A673 (cell line): ENCODE measurements at regions of chr3 and their contacts with region 1.

Region 1: DNA sequence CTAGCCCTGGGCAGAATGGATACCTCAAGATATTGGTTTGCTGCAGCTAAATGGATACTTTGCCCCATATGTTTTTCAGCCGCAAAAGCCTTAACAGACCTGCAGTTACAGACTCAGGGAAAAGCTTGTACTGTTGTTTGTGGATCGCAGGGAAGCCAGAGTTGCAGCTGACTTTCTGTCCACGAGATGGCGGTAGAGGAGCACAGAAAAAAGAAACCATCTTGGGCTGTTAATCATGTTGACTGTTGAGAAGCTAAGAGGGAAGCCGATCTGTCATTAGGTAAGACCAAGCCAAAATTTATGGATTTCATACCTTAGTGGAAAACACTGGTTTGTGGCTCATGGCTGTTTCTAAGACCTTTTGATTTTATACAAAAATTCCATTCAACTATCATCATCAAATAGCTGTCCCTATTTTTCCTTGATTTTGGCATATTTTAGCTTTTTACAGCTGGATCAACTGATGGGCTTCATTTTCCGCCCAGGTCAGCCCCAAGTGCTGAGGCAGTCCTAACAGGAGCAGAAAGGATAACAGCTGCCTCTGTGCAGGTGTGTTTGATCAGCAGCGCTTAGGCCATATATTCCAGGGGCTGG is 205.7 kb upstream of the ZPLD1 start:
- DNase-seq: peak; percentile 89
- H3K4me3 ChIP-seq: no peak overlapping the region
- H3K27ac ChIP-seq: no peak overlapping the region
- H3K4me1 ChIP-seq: peaks cover 38% of the 10 kb centered on the region
- H3K27me3 ChIP-seq: no peaks in the 10 kb centered on the region
- CTCF ChIP-seq: peak; percentile 97

Region 2: DNA sequence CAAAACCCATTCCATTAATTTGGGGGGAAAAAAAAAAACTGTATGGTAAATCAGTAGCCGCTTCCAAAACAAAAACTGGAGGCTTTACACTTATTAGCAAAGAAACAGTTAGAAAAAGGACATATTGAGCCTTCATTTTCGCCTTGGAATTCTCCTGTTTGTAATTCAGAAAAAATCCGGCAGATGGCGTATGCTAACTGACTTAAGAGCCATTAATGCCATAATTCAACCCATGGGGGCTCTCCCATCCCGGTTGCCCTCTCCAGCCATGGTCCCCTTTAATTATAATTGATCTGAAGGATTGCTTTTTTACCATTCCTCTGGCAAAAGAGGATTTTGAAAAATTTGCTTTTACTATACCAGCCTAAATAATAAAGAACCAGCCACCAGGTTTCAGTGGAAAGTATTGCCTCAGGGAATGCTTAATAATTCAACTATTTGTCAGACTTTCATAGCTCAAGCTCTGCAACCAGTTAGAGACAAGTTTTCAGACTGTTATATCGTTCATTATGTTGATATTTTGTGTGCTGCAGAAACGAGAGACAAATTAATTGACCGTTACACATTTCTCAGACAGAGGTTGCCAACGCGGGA is 533.3 kb before region 1 on chr3:
- CTCF ChIA-PET with region 1: no interaction called
- POLR2A ChIA-PET with region 1: no interaction called
- intact Hi-C with region 1: loop called (anchors 5 kb)
- DNase-seq: peak; percentile 85
- H3K4me3 ChIP-seq: peak overlapping the region; percentile 13
- H3K27ac ChIP-seq: no peak overlapping the region
- H3K4me1 ChIP-seq: peaks cover 19% of the 10 kb centered on the region
- H3K27me3 ChIP-seq: no peaks in the 10 kb centered on the region
- CTCF ChIP-seq: peak; percentile 67

Region 3: DNA sequence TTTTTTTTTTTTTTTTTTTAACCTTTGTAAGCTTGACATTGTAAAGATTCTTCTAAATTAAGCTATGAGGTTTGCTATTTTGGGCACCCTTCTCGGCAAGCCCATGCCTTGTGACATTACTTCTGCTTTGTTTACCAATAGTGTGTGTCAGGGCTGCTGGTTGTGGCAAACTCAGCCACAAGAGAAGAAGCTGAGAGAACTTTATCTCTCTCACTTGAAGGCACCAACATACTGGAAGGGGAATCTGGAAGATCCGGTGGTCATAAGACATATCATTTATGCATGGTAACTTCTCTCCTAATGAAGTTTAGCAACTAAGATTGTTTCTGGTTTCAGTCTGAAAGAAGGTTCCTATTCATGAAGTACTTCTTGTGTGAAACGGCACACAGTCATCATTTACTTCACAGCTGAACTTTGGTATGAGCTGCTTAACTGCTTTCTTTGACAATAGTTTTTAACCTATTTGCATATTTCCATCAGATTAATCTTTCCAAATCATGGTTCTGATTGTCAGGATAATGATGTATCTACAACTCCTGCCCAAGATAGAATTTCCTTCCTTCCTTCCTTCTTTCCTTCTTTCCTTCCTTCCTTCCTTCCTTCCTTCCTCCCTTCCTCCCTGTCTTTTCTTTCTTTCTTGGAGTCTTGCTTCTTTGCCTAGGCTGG is 190.5 kb before region 1 on chr3:
- CTCF ChIA-PET with region 1: interaction called, 8 read pairs
- POLR2A ChIA-PET with region 1: no interaction called
- intact Hi-C with region 1: loop called (anchors 1 kb)
- DNase-seq: peak; percentile 82
- H3K4me3 ChIP-seq: no peak overlapping the region
- H3K27ac ChIP-seq: peak overlapping the region; percentile 76
- H3K4me1 ChIP-seq: peaks cover 17% of the 10 kb centered on the region
- H3K27me3 ChIP-seq: no peaks in the 10 kb centered on the region
- CTCF ChIP-seq: no peak

Region 4: GRCh38 chr3:102248981-102249705 is 20.0 kb after region 1 on chr3:
- CTCF ChIA-PET with region 1: no interaction called
- POLR2A ChIA-PET with region 1: interaction called, 12 read pairs
- intact Hi-C with region 1: no loop called
- DNase-seq: no peak
- H3K4me3 ChIP-seq: no peak overlapping the region
- H3K27ac ChIP-seq: no peak overlapping the region
- H3K4me1 ChIP-seq: peaks cover 6% of the 10 kb centered on the region
- H3K27me3 ChIP-seq: no peaks in the 10 kb centered on the region
- CTCF ChIP-seq: no peak

Region 5: GRCh38 chr3:102529452-102529851 is 300.3 kb after region 1 on chr3:
- CTCF ChIA-PET with region 1: interaction called, 14 read pairs
- POLR2A ChIA-PET with region 1: no interaction called
- intact Hi-C with region 1: loop called (anchors 1 kb)
- DNase-seq: peak; percentile 66
- H3K4me3 ChIP-seq: no peak overlapping the region
- H3K27ac ChIP-seq: no peak overlapping the region
- H3K4me1 ChIP-seq: peaks cover 3% of the 10 kb centered on the region
- H3K27me3 ChIP-seq: no peaks in the 10 kb centered on the region
- CTCF ChIP-seq: peak; percentile 78

Region 6: GRCh38 chr3:102544741-102545140 is 315.6 kb after region 1 on chr3:
- CTCF ChIA-PET with region 1: no interaction called
- POLR2A ChIA-PET with region 1: no interaction called
- intact Hi-C with region 1: no loop called
- DNase-seq: no peak
- H3K4me3 ChIP-seq: no peak overlapping the region
- H3K27ac ChIP-seq: no peak overlapping the region
- H3K4me1 ChIP-seq: no peaks in the 10 kb centered on the region
- H3K27me3 ChIP-seq: no peaks in the 10 kb centered on the region
- CTCF ChIP-seq: no peak